Sigmoid colon (tissue), 7 donors: ENCODE measurements at regions of chr12 and their contacts with region 1.

Region 1: GRCh38 chr12:46372544-46373110 is at the start of gene SLC38A2:
- DNase-seq: peak; percentile 99
- H3K4me3 ChIP-seq: peak within 1 kb of the TSS; percentile 64 to 98 (median 90)
- H3K27ac ChIP-seq: peak within 1 kb of the TSS; percentile 95 to 99 (median 98)
- H3K4me1 ChIP-seq: peaks cover 0 to 41% (median 34%) of the 10 kb centered on the region in 4 donors
- H3K27me3 ChIP-seq: no peaks in the 10 kb centered on the region
- CTCF ChIP-seq: no peak
- EP300 ChIP-seq: no peak
- POLR2A ChIP-seq: peak; percentile 100
- total RNA-seq, gene SLC38A2: 234 to 299 (median 263) TPM

Region 2: DNA sequence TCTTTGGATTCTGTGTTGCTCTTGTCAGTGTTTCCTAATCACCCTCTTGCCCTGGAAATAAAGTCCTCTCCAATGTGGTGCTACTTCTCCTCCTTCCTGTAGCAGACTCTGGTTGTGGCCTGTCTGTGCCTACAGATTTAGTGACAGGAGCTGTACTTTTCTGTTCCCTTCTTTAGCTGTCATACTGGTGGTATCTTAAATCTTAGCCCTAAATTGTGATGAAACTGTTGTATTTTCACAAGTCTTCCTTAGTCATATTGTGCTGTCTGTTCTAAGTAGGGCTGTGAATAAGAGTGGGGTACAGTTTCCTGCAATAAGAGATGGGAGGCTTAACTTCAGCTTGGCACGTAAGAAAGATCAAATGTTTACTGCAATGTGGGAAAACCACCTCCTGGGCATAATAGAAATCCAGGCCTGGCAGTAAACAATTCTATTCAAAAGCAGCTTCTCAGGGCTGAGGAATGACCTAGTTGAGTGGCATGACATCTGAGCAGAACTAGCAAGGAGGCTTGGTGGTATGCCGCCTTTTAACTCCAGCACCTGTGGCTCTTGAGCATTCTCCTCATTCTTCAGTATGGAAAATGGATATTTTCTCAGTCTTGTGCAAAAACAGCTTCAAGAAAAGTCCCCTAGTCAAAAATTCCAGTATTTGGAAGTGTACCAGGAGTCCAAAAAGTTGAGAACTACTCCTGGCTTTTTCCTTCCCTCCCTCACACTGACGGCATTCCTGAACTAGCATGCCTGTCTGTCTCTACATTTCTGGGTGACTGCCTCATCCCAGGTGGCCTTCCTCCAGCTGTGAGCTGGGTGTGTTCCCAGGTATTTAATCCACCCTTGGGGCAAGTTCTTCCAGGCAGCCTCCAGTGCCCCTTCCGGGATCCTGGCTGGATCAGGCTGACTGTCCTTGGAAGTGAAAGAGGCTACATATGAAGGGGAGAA is 1137.3 kb before region 1 on chr12:
- intact Hi-C with region 1: no loop called
- DNase-seq: peak; percentile 68
- H3K4me3 ChIP-seq: no peak overlapping the region
- H3K27ac ChIP-seq: peak overlapping the region; percentile 85 to 89 (median 87)
- H3K4me1 ChIP-seq: peaks cover 0 to 63% (median 60%) of the 10 kb centered on the region in 4 donors
- H3K27me3 ChIP-seq: no peaks in the 10 kb centered on the region
- CTCF ChIP-seq: no peak
- EP300 ChIP-seq: peak in 1 of 4 donors; percentile 4
- POLR2A ChIP-seq: no peak

Region 3: DNA sequence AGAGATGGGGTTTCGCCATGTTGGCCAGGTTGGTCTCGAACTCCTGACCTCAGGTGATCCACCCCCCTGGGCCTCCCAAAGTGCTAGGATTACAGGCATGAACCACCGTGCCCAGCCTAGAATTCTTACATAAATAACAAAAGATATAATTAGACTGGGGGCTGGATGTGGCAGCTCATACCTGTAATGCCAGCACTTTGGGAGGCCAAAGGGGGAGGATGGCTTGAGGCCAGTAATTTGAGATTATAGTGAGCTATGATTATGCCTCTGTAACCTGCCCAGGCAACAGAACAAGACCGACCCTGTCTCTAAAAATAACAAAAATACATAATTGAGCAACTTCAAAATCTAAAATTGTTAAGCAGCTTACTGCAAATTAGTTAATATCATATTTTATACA is 512.7 kb before region 1 on chr12:
- intact Hi-C with region 1: no loop called
- DNase-seq: no peak
- H3K4me3 ChIP-seq: no peak overlapping the region
- H3K27ac ChIP-seq: no peak overlapping the region
- H3K4me1 ChIP-seq: peaks cover 0 to 34% (median 13%) of the 10 kb centered on the region in 4 donors
- H3K27me3 ChIP-seq: no peaks in the 10 kb centered on the region
- CTCF ChIP-seq: no peak
- EP300 ChIP-seq: no peak
- POLR2A ChIP-seq: no peak

Region 4: GRCh38 chr12:45990468-45991283 is 382.0 kb before region 1 on chr12 and contains the start of gene SCAF11:
- intact Hi-C with region 1: loop called (anchors 1 kb)
- DNase-seq: peak; percentile 100
- H3K4me3 ChIP-seq: peak within 1 kb of the TSS; percentile 71 to 92 (median 82)
- H3K27ac ChIP-seq: peak within 1 kb of the TSS; percentile 96 to 99 (median 98)
- H3K4me1 ChIP-seq: peaks cover 0 to 45% (median 36%) of the 10 kb centered on the region in 4 donors
- H3K27me3 ChIP-seq: no peaks in the 10 kb centered on the region
- CTCF ChIP-seq: peak; percentile 89 to 99 (median 96)
- EP300 ChIP-seq: peak in 2 of 4 donors; percentile 22 to 80
- POLR2A ChIP-seq: peak; percentile 90 to 95
- total RNA-seq, gene SCAF11: 116 to 165 (median 127) TPM

Region 5: DNA sequence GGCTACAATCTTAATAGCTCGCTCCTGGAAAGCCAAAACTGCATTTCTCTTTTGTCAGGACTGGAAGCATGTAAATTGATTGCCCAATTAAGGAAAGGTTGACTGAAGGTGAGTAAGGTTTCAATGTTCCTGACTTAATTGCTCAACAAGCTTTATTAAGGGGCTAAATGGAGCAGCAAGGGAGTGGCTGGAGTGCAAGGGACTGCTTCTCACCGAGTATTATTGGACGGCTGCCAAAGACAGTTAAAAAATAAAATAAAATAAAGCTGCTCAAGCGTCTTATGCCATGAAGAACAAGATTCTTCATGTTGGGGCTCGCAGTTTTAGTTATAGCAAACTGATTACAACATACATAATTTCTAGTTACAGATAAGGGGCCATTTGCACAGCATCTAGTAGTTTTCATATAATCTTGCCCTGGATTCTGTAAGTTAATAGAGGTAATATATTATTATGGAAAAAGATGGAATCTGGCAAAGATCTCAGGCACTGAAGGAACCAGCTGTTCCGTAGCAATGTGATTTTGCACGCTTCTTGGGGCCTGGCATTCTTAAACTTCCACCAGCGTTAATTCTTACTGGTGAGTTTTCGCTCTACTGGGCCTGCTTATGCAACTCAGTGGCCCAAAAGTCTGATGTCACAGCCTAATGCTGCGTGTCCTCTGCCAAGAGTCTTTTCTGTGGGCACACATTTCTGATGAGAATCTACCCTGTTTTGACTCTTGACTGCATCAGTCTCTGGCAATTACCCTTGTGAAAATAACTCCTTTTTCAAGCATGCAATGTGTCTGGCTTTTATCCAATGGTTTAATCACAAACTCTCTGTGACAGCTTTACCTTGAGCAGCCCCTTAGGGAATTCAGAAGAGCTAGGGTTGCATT is 212.3 kb before region 1 on chr12:
- intact Hi-C with region 1: loop called (anchors 5 kb)
- DNase-seq: peak; percentile 70
- H3K4me3 ChIP-seq: peak overlapping the region in 1 of 4 donors; percentile 2
- H3K27ac ChIP-seq: peak overlapping the region; percentile 69 to 84 (median 77)
- H3K4me1 ChIP-seq: peaks cover 0 to 51% (median 47%) of the 10 kb centered on the region in 4 donors
- H3K27me3 ChIP-seq: no peaks in the 10 kb centered on the region
- CTCF ChIP-seq: no peak
- EP300 ChIP-seq: peak in 3 of 4 donors; percentile 11 to 49 (median 33)
- POLR2A ChIP-seq: no peak

Region 6: GRCh38 chr12:46219884-46220655 is 152.6 kb before region 1 on chr12:
- intact Hi-C with region 1: loop called (anchors 5 kb)
- DNase-seq: no peak
- H3K4me3 ChIP-seq: no peak overlapping the region
- H3K27ac ChIP-seq: peak overlapping the region; percentile 73 to 84 (median 80)
- H3K4me1 ChIP-seq: peaks cover 0 to 96% (median 74%) of the 10 kb centered on the region in 4 donors
- H3K27me3 ChIP-seq: no peaks in the 10 kb centered on the region
- CTCF ChIP-seq: no peak
- EP300 ChIP-seq: no peak
- POLR2A ChIP-seq: no peak

Region 7: DNA sequence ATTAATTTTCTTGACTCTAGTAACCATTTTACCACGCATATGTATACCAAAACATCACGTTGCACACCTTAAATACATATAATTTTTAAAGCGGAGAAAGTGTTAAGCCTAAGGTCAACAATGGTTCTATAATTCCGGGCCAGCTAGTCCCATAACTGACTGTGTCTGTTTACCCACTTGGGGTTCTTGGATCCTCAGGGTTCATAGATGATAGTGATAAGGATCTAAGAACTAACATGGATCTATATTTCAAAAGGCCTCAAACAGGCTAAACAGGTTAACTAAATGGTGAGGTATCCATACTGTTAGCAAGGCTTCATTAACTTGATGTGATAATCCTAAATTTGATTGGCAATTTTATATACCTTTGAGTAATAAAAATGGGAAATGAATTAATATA is 113.5 kb before region 1 on chr12:
- intact Hi-C with region 1: no loop called
- DNase-seq: no peak
- H3K4me3 ChIP-seq: no peak overlapping the region
- H3K27ac ChIP-seq: peak overlapping the region in 2 of 4 donors; percentile 82 to 92
- H3K4me1 ChIP-seq: peaks cover 0 to 89% (median 70%) of the 10 kb centered on the region in 4 donors
- H3K27me3 ChIP-seq: no peaks in the 10 kb centered on the region
- CTCF ChIP-seq: no peak
- EP300 ChIP-seq: no peak
- POLR2A ChIP-seq: no peak

Region 8: GRCh38 chr12:46382964-46383653 is 10.5 kb after region 1 on chr12:
- intact Hi-C with region 1: loop called (anchors 1 kb)
- DNase-seq: peak; percentile 99
- H3K4me3 ChIP-seq: peak overlapping the region; percentile 66 to 80 (median 74)
- H3K27ac ChIP-seq: peak overlapping the region; percentile 97 to 100 (median 99)
- H3K4me1 ChIP-seq: peaks cover 0 to 51% (median 45%) of the 10 kb centered on the region in 4 donors
- H3K27me3 ChIP-seq: no peaks in the 10 kb centered on the region
- CTCF ChIP-seq: no peak
- EP300 ChIP-seq: peak in 1 of 4 donors; percentile 89
- POLR2A ChIP-seq: peak in 1 of 2 donors; percentile 51

Region 9: DNA sequence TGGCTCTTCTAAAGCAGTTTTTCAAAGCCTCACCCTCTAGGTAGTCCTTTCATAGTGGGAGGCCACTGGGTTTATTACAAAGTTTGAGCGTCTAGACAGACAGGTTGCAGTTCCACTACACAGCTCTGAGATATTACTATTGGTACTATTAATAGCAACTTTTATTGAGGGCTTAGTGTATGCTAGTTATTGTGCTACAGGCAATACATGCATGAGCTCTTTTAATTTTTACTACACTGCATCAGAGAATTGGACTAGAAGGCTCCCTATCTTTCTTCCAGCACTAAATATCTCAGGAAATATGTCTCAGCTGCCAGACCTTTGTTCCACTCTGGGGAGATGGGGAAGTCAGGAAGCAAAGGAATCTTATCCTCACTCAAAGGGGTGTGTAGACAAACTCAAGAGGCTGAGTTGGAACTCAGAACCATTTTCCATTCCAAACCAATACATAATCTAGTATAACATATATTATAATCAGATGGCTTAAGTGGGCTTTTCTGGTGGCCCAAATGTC is 161.8 kb after region 1 on chr12:
- intact Hi-C with region 1: no loop called
- DNase-seq: no peak
- H3K4me3 ChIP-seq: no peak overlapping the region
- H3K27ac ChIP-seq: no peak overlapping the region
- H3K4me1 ChIP-seq: peaks cover 0 to 9% (median 8%) of the 10 kb centered on the region in 4 donors
- H3K27me3 ChIP-seq: no peaks in the 10 kb centered on the region
- CTCF ChIP-seq: no peak
- EP300 ChIP-seq: no peak
- POLR2A ChIP-seq: no peak

Region 10: GRCh38 chr12:46661110-46661845 is 288.7 kb after region 1 on chr12:
- intact Hi-C with region 1: loop called (anchors 2 kb)
- DNase-seq: no peak
- H3K4me3 ChIP-seq: peak overlapping the region in 1 of 4 donors; percentile 26
- H3K27ac ChIP-seq: peak overlapping the region; percentile 68 to 81 (median 74)
- H3K4me1 ChIP-seq: peaks cover 0 to 39% (median 34%) of the 10 kb centered on the region in 4 donors
- H3K27me3 ChIP-seq: no peaks in the 10 kb centered on the region
- CTCF ChIP-seq: peak; percentile 83 to 91 (median 86)
- EP300 ChIP-seq: no peak
- POLR2A ChIP-seq: no peak